ENCODE measurements at regions of chr9 and their contacts with region 1.

Region 1: GRCh38 chr9:21709464-21710058 is 92.9 kb upstream of the MTAP start:
- DNase-seq: peak; percentile 31 to 66 (median 41)
- H3K4me3 ChIP-seq: no peak overlapping the region
- H3K4me3 Mint-ChIP-seq: no peak overlapping the region
- H3K27ac ChIP-seq: no peak overlapping the region
- H3K27ac Mint-ChIP-seq: peak overlapping the region in 1 of 8 donors; percentile 62
- H3K4me1 ChIP-seq: no peaks in the 10 kb centered on the region
- H3K4me1 Mint-ChIP-seq: peaks cover 0 to 23% (median 3%) of the 10 kb centered on the region in 3 donors
- H3K27me3 ChIP-seq: no peaks in the 10 kb centered on the region
- H3K27me3 Mint-ChIP-seq: peaks cover 5 to 9% of the 10 kb centered on the region in 2 donors

Region 2: GRCh38 chr9:21653091-21653490 is 56.5 kb before region 1 on chr9:
- CTCF ChIA-PET with region 1: no interaction called
- POLR2A ChIA-PET with region 1: no interaction called
- DNase-seq: no peak
- H3K4me3 ChIP-seq: no peak overlapping the region
- H3K4me3 Mint-ChIP-seq: no peak overlapping the region
- H3K27ac ChIP-seq: no peak overlapping the region
- H3K27ac Mint-ChIP-seq: no peak overlapping the region
- H3K4me1 ChIP-seq: no peaks in the 10 kb centered on the region
- H3K4me1 Mint-ChIP-seq: no peaks in the 10 kb centered on the region
- H3K27me3 ChIP-seq: no peaks in the 10 kb centered on the region
- H3K27me3 Mint-ChIP-seq: peaks cover 11 to 59% of the 10 kb centered on the region in 2 donors

Region 3: GRCh38 chr9:21789541-21790037 is 80.0 kb after region 1 on chr9:
- CTCF ChIA-PET with region 1: interaction called, 36 read pairs
- POLR2A ChIA-PET with region 1: no interaction called
- DNase-seq: peak in 4 of 5 donors; percentile 29 to 73 (median 66)
- H3K4me3 ChIP-seq: peak overlapping the region; percentile 59
- H3K4me3 Mint-ChIP-seq: peak overlapping the region in 6 of 7 donors; percentile 66 to 82 (median 77)
- H3K27ac ChIP-seq: no peak overlapping the region
- H3K27ac Mint-ChIP-seq: peak overlapping the region in 1 of 8 donors; percentile 46
- H3K4me1 ChIP-seq: no peaks in the 10 kb centered on the region
- H3K4me1 Mint-ChIP-seq: peaks cover 0 to 5% (median 0%) of the 10 kb centered on the region in 3 donors
- H3K27me3 ChIP-seq: peaks cover 9% of the 10 kb centered on the region
- H3K27me3 Mint-ChIP-seq: peaks cover 6 to 12% of the 10 kb centered on the region in 2 donors

Measured in CD8-positive, alpha-beta memory T cell (primary cell).